Activated CD4-positive, alpha-beta T cell treated with anti-CD3 and anti-CD28 coated beads for 36 hours (primary cell): ENCODE measurements at regions of chr14 and their contacts with region 1.

Region 1: GRCh38 chr14:67571272-67571850 is 28.7 kb downstream of the PIGH start:
- DNase-seq: peak; percentile 82
- ATAC-seq: peak; percentile 97
- H3K4me3 Mint-ChIP-seq: no peak overlapping the region
- H3K27ac Mint-ChIP-seq: no peak overlapping the region
- H3K4me1 Mint-ChIP-seq: no peaks in the 10 kb centered on the region
- H3K27me3 Mint-ChIP-seq: peaks cover 3% of the 10 kb centered on the region

Region 2: DNA sequence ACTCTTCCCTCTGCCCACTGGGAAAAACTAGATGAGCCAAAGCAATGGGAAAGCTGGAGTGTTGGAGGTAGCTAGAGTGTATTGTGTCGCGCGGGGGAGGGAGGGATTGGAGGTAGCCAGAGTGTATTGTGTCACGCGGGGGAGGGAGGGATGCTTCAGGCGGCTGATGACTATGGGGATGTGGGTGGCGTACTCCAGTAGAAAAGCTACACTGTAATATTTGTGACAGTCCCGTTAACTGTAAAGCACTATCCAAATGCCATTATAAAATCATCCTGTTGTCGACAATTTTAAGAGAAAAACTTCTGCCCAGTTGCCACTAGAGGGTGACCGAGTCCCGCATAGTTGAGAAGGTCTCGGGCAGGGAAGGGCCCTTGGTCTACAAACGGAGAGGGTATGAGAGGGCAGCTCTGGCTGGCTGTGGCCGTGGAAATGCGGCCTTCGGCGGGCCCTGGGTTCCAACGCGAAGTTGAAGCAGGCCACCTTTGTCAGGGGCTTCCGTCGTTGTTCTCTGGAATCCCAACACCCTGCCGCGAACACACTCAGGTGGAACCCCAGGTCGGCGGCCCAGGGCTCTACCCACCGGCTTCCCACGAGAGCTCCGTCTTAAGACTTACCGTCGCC is 144.3 kb before region 1 on chr14:
- CTCF ChIA-PET with region 1: interaction called, 159 read pairs
- POLR2A ChIA-PET with region 1: no interaction called
- intact Hi-C with region 1: loop called (anchors 1 kb)
- DNase-seq: peak; percentile 85
- ATAC-seq: peak; percentile 98
- H3K4me3 Mint-ChIP-seq: no peak overlapping the region
- H3K27ac Mint-ChIP-seq: no peak overlapping the region
- H3K4me1 Mint-ChIP-seq: no peaks in the 10 kb centered on the region
- H3K27me3 Mint-ChIP-seq: peaks cover 19% of the 10 kb centered on the region

Region 3: GRCh38 chr14:67526676-67527459 is 44.5 kb before region 1 on chr14:
- CTCF ChIA-PET with region 1: interaction called, 41 read pairs
- POLR2A ChIA-PET with region 1: no interaction called
- intact Hi-C with region 1: loop called (anchors 1 kb)
- DNase-seq: peak; percentile 60
- ATAC-seq: peak; percentile 91
- H3K4me3 Mint-ChIP-seq: no peak overlapping the region
- H3K27ac Mint-ChIP-seq: no peak overlapping the region
- H3K4me1 Mint-ChIP-seq: no peaks in the 10 kb centered on the region
- H3K27me3 Mint-ChIP-seq: peaks cover 12% of the 10 kb centered on the region

Region 4: GRCh38 chr14:67557126-67557525 is 14.2 kb before region 1 on chr14:
- CTCF ChIA-PET with region 1: interaction called, 48 read pairs
- POLR2A ChIA-PET with region 1: no interaction called
- intact Hi-C with region 1: no loop called
- DNase-seq: no peak
- ATAC-seq: no peak
- H3K4me3 Mint-ChIP-seq: no peak overlapping the region
- H3K27ac Mint-ChIP-seq: no peak overlapping the region
- H3K4me1 Mint-ChIP-seq: no peaks in the 10 kb centered on the region
- H3K27me3 Mint-ChIP-seq: no peaks in the 10 kb centered on the region

Region 5: GRCh38 chr14:67704484-67705089 is 133.2 kb after region 1 on chr14:
- CTCF ChIA-PET with region 1: interaction called, 24 read pairs
- POLR2A ChIA-PET with region 1: no interaction called
- intact Hi-C with region 1: no loop called
- DNase-seq: peak; percentile 35
- ATAC-seq: peak; percentile 87
- H3K4me3 Mint-ChIP-seq: no peak overlapping the region
- H3K27ac Mint-ChIP-seq: no peak overlapping the region
- H3K4me1 Mint-ChIP-seq: no peaks in the 10 kb centered on the region
- H3K27me3 Mint-ChIP-seq: peaks cover 3% of the 10 kb centered on the region